Naive thymus-derived CD8-positive, alpha-beta T cell (primary cell): ENCODE measurements at regions of chr9 and their contacts with region 1.

Region 1: DNA sequence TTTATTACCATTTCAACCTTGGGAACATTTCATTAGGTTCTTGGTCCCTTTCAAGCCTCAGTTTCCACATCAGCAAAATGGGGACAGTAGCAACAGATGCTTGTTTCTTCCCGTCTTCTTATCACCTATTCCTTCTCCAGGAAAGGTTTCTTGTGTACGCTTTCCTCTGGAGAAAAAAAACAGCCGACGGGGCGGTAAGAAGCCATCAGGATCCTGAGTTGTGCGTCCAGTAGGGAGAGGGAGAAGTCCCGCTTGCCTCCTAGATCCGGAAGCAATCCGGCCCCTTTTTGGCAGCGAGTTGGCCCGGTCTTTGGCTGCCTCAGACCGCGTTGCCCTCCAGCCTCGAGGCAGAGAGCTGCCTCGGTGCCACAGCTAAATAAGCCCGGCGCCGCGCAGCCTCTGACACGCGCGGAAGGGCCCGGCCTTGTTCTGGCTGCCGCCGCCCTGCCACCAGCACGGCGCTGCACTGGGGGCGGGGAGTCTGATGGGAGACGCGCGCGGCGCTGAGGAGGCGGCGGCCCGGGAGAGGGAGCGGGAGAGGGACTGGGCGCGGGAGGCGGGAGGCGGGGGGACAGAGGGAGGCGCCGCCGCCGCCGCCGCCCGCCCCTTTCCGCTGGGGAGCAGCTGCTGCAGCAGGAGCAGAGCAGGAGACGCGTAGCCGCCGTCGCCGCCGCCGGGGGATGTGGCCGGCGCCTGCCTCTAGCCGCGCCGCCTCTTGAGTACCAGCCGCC is at the start of gene SLC44A1:
- DNase-seq: peak; percentile 81 to 95 (median 86)
- ATAC-seq: peak; percentile 81 to 85
- H3K4me3 Mint-ChIP-seq: peak within 1 kb of the TSS; percentile 85 to 96 (median 92)
- H3K27ac Mint-ChIP-seq: peak within 1 kb of the TSS; percentile 80 to 96 (median 89)
- H3K4me1 Mint-ChIP-seq: peaks cover 12 to 35% (median 30%) of the 10 kb centered on the region in 4 donors
- H3K27me3 Mint-ChIP-seq: peaks cover 6 to 20% (median 12%) of the 10 kb centered on the region in 5 donors
- polyA plus RNA-seq, gene SLC44A1: 12.2 to 16.8 (median 14.3) TPM

Region 2: DNA sequence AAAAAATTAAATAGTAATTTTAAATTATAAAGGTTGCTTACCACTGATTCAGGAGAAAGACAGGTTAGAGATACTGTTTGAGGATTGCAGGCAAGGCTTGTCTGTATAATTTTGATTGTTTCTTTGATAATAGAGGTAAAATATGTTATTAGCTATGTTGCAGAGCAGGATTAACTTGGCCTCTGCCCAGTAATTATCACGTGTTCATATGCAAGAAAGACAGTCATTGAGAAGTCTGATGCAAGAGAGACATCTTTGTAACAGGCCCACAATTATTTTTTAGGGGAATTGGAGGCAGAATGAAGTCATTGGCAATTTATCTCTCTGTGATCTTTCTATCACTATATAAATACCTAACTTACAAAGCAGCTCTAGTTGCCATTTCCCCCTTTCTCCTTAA is 46.2 kb after region 1 on chr9:
- POLR2A ChIA-PET with region 1: no interaction called
- DNase-seq: no peak
- ATAC-seq: no peak
- H3K4me3 Mint-ChIP-seq: no peak overlapping the region
- H3K27ac Mint-ChIP-seq: no peak overlapping the region
- H3K4me1 Mint-ChIP-seq: peaks cover 7 to 18% (median 10%) of the 10 kb centered on the region in 4 donors
- H3K27me3 Mint-ChIP-seq: no peaks in the 10 kb centered on the region

Region 3: GRCh38 chr9:105405514-105406131 is 161.5 kb after region 1 on chr9:
- POLR2A ChIA-PET with region 1: interaction called, 10 read pairs
- DNase-seq: peak in 9 of 10 donors; percentile 25 to 95 (median 80)
- ATAC-seq: peak; percentile 94 to 96
- H3K4me3 Mint-ChIP-seq: peak overlapping the region; percentile 24 to 88 (median 67)
- H3K27ac Mint-ChIP-seq: peak overlapping the region in 9 of 10 donors; percentile 37 to 96 (median 64)
- H3K4me1 Mint-ChIP-seq: peaks cover 25 to 40% (median 31%) of the 10 kb centered on the region in 4 donors
- H3K27me3 Mint-ChIP-seq: peaks cover 39 to 67% (median 49%) of the 10 kb centered on the region in 5 donors